Esophagus muscularis mucosa (tissue), 4 donors: ENCODE measurements at regions of chr2 and their contacts with region 1.

Region 1: DNA sequence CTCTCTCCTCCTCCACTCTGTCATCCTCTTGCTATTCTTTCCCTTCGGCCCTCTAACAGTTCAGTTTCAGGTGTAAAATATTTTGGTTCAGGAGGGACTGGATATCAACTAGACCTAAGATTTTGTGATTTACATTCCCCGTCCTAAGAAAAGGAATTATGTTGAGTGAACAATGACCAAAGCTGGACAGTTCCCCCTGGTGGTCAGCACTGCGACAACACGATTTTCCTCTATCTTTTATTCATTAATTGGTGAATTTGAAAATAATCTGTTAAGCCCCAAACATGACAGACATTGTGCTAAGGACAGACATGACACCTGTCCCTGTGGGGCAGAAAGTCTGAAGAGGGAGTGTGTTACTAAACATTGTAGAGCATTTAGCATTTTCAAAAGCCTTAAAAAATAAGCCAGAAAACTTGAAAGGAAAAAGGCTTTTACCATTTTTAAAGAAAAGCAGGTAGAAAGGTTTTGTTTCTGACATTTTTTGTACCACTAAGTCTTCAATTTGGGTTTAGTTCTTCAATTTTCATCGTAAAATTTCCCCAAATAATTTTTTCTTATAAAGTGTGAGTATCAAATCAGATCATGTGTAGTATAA is 28.4 kb upstream of the GTF2A1L start:
- DNase-seq: no peak
- H3K4me3 ChIP-seq: no peak overlapping the region
- H3K27ac ChIP-seq: peak overlapping the region in 3 of 4 donors; percentile 33 to 54 (median 42)
- H3K4me1 ChIP-seq: peaks cover 0 to 67% (median 59%) of the 10 kb centered on the region in 4 donors
- H3K27me3 ChIP-seq: no peaks in the 10 kb centered on the region
- CTCF ChIP-seq: peak; percentile 70 to 77 (median 72)
- EP300 ChIP-seq: no peak
- POLR2A ChIP-seq: no peak

Region 2: DNA sequence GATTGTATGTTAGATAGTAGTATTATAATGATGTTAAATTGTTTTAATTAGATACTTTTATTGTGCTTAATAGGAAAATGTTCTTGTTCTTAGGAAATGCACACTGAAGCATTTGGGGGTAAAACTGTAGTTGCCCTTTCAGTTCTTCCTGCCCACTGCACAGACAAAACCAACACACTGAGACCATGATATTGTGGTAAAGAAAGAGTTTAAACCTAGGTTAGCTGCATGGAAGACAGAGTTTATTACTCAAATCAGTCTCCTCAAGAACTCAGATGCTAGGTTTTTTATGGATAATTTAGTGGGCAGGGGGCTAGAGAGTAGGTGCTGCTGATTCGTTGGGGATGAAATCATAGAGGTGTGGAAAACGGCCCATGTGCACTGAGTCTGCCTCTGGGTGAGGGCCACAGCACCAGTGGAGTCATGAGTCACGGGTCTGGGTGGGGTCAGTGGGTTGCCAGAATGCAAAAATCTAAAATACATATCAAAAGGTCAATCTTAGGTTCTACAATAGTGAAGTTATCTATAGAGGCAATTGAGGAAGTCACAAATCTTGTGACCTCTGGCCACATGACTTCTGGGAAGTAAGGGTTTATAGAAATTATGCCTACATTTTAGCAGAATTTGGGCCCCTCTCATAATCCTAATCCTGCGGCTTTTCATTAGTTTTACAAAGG is 399.6 kb before region 1 on chr2:
- intact Hi-C with region 1: no loop called
- DNase-seq: no peak
- H3K4me3 ChIP-seq: no peak overlapping the region
- H3K27ac ChIP-seq: no peak overlapping the region
- H3K4me1 ChIP-seq: no peaks in the 10 kb centered on the region
- H3K27me3 ChIP-seq: no peaks in the 10 kb centered on the region
- CTCF ChIP-seq: no peak
- EP300 ChIP-seq: no peak
- POLR2A ChIP-seq: no peak

Region 3: DNA sequence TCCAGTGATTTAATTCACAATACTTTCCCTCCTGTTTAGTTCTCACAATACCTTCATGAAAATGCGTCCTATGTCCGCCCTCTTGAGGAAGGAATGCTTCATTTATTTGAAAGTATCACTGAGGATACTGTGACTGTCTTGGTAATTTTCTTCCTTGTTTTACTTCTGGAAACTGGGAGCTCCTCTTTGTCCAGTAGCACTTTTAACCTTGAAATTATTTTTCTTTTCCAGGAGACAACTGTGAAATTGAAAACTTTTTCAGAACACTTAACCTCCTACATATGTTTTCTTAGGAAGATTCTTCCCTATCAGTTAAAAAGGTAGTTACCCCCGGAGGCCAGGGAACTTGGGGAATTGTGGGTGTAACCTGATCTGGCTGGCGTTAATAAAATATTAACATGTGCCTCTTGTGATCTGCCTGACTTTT is 118.2 kb before region 1 on chr2:
- intact Hi-C with region 1: loop called (anchors 2 kb)
- DNase-seq: no peak
- H3K4me3 ChIP-seq: no peak overlapping the region
- H3K27ac ChIP-seq: peak overlapping the region; percentile 86 to 89 (median 88)
- H3K4me1 ChIP-seq: peaks cover 17 to 42% (median 39%) of the 10 kb centered on the region in 4 donors
- H3K27me3 ChIP-seq: no peaks in the 10 kb centered on the region
- CTCF ChIP-seq: peak; percentile 65 to 72 (median 71)
- EP300 ChIP-seq: no peak
- POLR2A ChIP-seq: no peak

Region 4: DNA sequence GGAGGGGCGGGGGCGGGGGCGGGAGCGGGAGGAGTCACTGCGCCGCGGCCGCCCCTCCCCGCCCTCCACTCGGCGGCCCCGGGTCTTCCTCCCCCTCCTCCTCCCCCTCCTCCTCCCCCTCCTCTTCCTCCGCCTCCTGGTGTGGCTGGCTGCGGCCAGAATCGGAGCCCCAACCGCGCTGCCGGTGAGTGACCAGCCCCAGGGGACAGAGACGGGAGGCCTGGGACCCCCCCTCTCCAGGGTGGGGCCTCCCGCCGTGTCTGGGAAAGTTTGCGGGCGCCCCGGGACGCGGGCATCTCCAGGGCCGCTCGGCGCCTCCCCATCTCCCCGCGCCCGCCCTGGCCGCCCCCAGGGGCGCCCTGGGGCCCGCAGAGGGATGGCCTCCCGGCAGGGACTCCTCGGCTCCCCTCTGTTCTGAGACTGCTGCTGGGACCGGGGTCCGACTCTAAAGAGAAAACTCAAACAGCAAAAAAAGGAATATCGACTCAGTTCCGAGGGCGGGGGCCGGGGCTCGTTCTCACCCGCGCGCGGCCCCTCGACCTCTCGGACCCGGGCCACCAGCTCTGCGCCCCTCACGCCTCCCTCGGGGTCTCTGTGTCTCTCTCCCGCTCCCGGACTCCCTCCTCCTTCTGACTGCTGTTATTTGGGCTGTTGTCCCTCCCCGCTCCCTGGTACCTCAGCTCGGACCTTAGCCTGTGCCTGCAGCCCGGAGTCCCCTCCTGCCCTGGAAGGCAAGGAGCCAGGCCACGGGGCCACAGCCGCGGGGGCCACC is 59.0 kb before region 1 on chr2 and contains the start of gene STON1:
- intact Hi-C with region 1: loop called (anchors 2 kb)
- DNase-seq: no peak
- H3K4me3 ChIP-seq: peak within 1 kb of the TSS; percentile 90 to 99 (median 94)
- H3K27ac ChIP-seq: peak within 1 kb of the TSS; percentile 98 to 99 (median 98)
- H3K4me1 ChIP-seq: peaks cover 23 to 85% (median 82%) of the 10 kb centered on the region in 4 donors
- H3K27me3 ChIP-seq: no peaks in the 10 kb centered on the region
- CTCF ChIP-seq: peak in 1 of 3 experiments; percentile 24
- EP300 ChIP-seq: no peak
- POLR2A ChIP-seq: no peak
- total RNA-seq, gene STON1: 135 to 198 (median 168) TPM

Region 5: GRCh38 chr2:48545244-48545643 is 44.0 kb before region 1 on chr2:
- intact Hi-C with region 1: no loop called
- DNase-seq: no peak
- H3K4me3 ChIP-seq: no peak overlapping the region
- H3K27ac ChIP-seq: peak overlapping the region; percentile 73 to 83 (median 75)
- H3K4me1 ChIP-seq: peaks cover 27 to 100% (median 98%) of the 10 kb centered on the region in 4 donors
- H3K27me3 ChIP-seq: no peaks in the 10 kb centered on the region
- CTCF ChIP-seq: peak in 1 of 3 experiments; percentile 15
- EP300 ChIP-seq: no peak
- POLR2A ChIP-seq: no peak